ENCODE measurements at regions of chr18 and their contacts with region 1.

Region 1: DNA sequence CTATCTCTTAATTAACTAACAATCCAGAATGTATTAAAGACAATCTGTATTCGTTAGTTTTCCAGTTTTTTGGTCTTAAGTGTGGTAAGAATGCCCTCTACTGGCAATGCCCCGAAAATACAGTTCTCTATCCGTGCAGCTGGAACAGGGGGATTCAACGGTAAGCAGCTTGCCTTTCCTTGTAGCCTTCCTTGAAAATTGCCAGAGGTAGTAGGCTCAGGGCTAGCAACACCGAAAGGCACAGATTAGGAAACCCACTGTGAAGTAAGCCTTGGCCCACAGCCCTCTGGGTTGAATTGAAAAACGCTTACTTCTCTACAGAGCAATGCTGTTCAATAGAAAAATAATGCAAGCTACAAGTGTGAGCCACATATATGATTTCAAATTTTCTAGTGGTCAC is 17.1 kb upstream of the VPS4B start:
- H3K4me3 ChIP-seq: no peak overlapping the region
- H3K27ac ChIP-seq: no peak overlapping the region
- H3K4me1 ChIP-seq: no peaks in the 10 kb centered on the region
- CTCF ChIP-seq: peak; percentile 72

Region 2: GRCh38 chr18:63016270-63016669 is 423.1 kb before region 1 on chr18:
- CTCF ChIA-PET with region 1: interaction called, 49 read pairs
- POLR2A ChIA-PET with region 1: no interaction called
- H3K4me3 ChIP-seq: no peak overlapping the region
- H3K27ac ChIP-seq: no peak overlapping the region
- H3K4me1 ChIP-seq: no peaks in the 10 kb centered on the region
- CTCF ChIP-seq: peak; percentile 32; the same call in 1 of the 2 replicates

Region 3: DNA sequence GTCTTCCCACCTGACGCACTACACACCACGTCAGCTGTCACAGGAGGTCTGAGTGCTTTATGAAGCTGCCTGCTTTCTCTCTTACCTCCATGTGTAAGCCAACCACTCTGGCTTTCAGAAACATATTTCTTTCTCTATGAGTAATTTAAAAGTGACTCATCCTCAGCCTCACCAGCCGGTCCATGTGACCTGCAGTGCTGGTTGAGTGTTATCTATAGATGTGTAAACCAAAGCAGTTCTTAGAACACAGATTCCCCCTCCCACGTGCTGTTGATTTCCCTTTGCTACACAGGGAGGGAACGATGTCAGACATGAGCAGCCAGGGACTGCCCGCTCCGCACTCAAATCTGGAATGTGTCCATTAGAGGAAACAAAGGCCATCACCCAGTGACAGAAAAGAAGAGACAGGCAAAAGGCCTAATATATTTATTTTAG is 277.6 kb before region 1 on chr18:
- CTCF ChIA-PET with region 1: no interaction called
- POLR2A ChIA-PET with region 1: no interaction called
- H3K4me3 ChIP-seq: no peak overlapping the region
- H3K27ac ChIP-seq: no peak overlapping the region
- H3K4me1 ChIP-seq: peaks cover 11% of the 10 kb centered on the region
- CTCF ChIP-seq: no peak

Region 4: GRCh38 chr18:63317982-63318881 is 121.1 kb before region 1 on chr18:
- CTCF ChIA-PET with region 1: interaction called, 33 read pairs
- POLR2A ChIA-PET with region 1: no interaction called
- H3K4me3 ChIP-seq: peak overlapping the region; percentile 54
- H3K27ac ChIP-seq: peak overlapping the region; percentile 20; the same call in 1 of the 2 replicates
- H3K4me1 ChIP-seq: peaks cover 25% of the 10 kb centered on the region; the same call in 1 of the 2 replicates
- CTCF ChIP-seq: peak; percentile 98

Region 5: GRCh38 chr18:63367053-63367953 is 72.0 kb before region 1 on chr18 and contains the start of gene KDSR:
- CTCF ChIA-PET with region 1: interaction called, 22 read pairs
- POLR2A ChIA-PET with region 1: interaction called, 3 read pairs
- H3K4me3 ChIP-seq: peak within 1 kb of the TSS; percentile 74
- H3K27ac ChIP-seq: peak within 1 kb of the TSS; percentile 95
- H3K4me1 ChIP-seq: peaks cover 7% of the 10 kb centered on the region; the same call in 1 of the 2 replicates
- CTCF ChIP-seq: peak; percentile 53

Region 6: GRCh38 chr18:63427558-63427957 is 11.8 kb before region 1 on chr18:
- CTCF ChIA-PET with region 1: interaction called, 18 read pairs
- POLR2A ChIA-PET with region 1: no interaction called
- H3K4me3 ChIP-seq: no peak overlapping the region
- H3K27ac ChIP-seq: no peak overlapping the region
- H3K4me1 ChIP-seq: no peaks in the 10 kb centered on the region
- CTCF ChIP-seq: no peak

Region 7: DNA sequence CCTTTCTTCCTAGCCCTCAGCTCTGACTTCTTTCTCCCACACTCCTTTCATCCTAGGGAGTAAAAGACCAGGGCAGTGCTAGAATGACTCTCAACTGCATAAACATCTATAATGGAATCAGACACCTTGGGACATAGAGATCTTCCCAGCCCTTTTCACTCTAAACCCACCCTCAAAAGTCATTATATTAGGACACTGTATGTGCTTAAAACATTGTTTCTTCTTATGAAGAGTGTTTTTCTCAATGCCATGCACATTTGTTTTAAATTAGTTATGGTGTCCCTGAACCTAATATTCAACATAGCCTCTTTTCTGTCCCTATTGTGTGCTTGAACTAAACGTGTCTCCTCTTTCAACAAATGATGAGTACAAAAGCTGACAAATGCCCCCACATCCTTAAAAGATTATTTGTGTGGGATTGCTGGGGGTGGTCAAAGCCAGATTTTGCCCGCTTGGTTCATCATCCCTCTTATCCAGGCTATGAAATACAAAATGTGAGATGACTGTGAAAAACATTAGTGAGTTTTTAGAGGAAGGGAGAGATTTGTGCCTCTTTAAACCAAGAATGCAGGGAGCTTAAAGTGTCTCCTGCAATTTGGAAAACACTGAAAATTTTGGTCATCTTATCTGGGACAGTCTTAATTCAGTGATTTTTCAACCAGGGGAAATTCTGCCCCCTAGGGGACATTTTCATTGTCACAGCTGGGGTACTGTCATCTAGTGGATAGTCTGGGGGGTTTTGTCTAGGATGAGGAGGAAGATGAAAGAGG is 66.4 kb after region 1 on chr18:
- CTCF ChIA-PET with region 1: interaction called, 18 read pairs
- POLR2A ChIA-PET with region 1: no interaction called
- H3K4me3 ChIP-seq: no peak overlapping the region
- H3K27ac ChIP-seq: no peak overlapping the region
- H3K4me1 ChIP-seq: no peaks in the 10 kb centered on the region
- CTCF ChIP-seq: 0 out of 2 replicates have a peak, but pooled peaks have one; percentile 27

Region 8: DNA sequence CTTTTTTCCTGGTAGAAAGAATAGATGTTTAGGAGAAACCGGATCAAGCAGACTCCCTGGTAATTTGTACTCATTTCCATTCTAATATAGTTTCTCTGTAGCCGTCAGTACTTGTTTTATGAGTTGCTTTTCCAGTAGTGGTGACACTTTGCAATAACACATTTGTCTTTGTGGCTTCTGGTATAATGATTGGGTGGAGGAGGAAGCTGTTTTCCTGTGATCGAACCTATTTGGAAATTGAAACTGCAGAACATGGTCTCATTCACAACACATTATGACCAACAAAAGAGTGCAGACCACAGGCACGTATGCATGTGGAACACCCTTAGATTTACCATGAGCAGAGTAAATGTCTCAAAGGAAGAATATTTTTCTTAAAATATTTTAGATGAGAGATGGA is 95.3 kb after region 1 on chr18:
- CTCF ChIA-PET with region 1: no interaction called
- POLR2A ChIA-PET with region 1: no interaction called
- H3K4me3 ChIP-seq: no peak overlapping the region
- H3K27ac ChIP-seq: no peak overlapping the region
- H3K4me1 ChIP-seq: no peaks in the 10 kb centered on the region
- CTCF ChIP-seq: no peak

Region 9: GRCh38 chr18:63590373-63590772 is 151.0 kb after region 1 on chr18:
- CTCF ChIA-PET with region 1: no interaction called
- POLR2A ChIA-PET with region 1: no interaction called
- H3K4me3 ChIP-seq: no peak overlapping the region
- H3K27ac ChIP-seq: no peak overlapping the region
- H3K4me1 ChIP-seq: no peaks in the 10 kb centered on the region
- CTCF ChIP-seq: no peak

Region 10: DNA sequence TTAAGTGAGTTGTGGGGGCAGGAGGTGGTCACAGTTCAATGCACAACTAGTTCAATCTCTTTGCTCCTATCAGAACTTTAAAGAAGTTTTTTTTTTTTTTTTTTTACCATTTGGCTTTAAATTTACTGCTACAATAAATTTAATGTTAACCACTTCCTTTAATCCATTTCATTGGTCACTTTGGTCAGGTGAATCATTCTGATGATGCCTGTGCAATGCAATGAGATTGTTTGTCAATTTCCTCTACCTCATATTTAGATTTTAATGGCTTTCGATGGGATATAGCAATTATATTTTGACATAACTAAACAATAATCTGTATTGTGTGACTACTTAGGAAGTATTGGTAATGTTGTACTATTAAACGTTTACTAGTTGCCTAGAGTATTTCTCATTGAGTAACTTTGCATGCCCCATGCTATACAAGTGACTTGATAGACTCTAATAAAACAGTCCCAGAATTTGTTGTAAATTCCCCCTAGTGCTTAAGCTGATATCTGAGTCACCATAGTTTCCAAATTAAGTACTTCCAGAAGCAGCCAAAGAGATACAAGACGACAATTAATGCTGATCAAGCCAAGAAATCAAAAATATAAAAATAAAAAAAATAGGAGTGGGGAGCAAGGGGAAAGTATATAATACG is 395.3 kb after region 1 on chr18:
- CTCF ChIA-PET with region 1: no interaction called
- POLR2A ChIA-PET with region 1: no interaction called
- H3K4me3 ChIP-seq: no peak overlapping the region
- H3K27ac ChIP-seq: no peak overlapping the region
- H3K4me1 ChIP-seq: no peaks in the 10 kb centered on the region
- CTCF ChIP-seq: no peak

Measured in HEK293 (cell line).